Spleen (tissue), 13 donors: ENCODE measurements at regions of chr5 and their contacts with region 1.

Region 1: GRCh38 chr5:16666883-16667398 is 50.1 kb upstream of the RETREG1 start:
- DNase-seq: no peak
- H3K4me3 ChIP-seq: no peak overlapping the region
- H3K27ac ChIP-seq: no peak overlapping the region
- H3K4me1 ChIP-seq: no peaks in the 10 kb centered on the region
- H3K27me3 ChIP-seq: no peaks in the 10 kb centered on the region
- CTCF ChIP-seq: peak in 7 of 11 experiments; percentile 11 to 42 (median 22)
- POLR2A ChIP-seq: no peak

Region 2: GRCh38 chr5:16143381-16144049 is 523.4 kb before region 1 on chr5:
- intact Hi-C with region 1: no loop called
- DNase-seq: no peak
- H3K4me3 ChIP-seq: no peak overlapping the region
- H3K27ac ChIP-seq: no peak overlapping the region
- H3K4me1 ChIP-seq: no peaks in the 10 kb centered on the region
- H3K27me3 ChIP-seq: no peaks in the 10 kb centered on the region
- CTCF ChIP-seq: no peak
- POLR2A ChIP-seq: no peak

Region 3: GRCh38 chr5:16492391-16493175 is 174.4 kb before region 1 on chr5:
- intact Hi-C with region 1: loop called (anchors 10 kb)
- DNase-seq: no peak
- H3K4me3 ChIP-seq: no peak overlapping the region
- H3K27ac ChIP-seq: no peak overlapping the region
- H3K4me1 ChIP-seq: no peaks in the 10 kb centered on the region
- H3K27me3 ChIP-seq: no peaks in the 10 kb centered on the region
- CTCF ChIP-seq: no peak
- POLR2A ChIP-seq: no peak